G401 (cell line): ENCODE measurements at regions of chr20 and their contacts with region 1.

Region 1: GRCh38 chr20:44537993-44538392 is 16.1 kb upstream of the SERINC3 start:
- DNase-seq: no peak

Region 2: DNA sequence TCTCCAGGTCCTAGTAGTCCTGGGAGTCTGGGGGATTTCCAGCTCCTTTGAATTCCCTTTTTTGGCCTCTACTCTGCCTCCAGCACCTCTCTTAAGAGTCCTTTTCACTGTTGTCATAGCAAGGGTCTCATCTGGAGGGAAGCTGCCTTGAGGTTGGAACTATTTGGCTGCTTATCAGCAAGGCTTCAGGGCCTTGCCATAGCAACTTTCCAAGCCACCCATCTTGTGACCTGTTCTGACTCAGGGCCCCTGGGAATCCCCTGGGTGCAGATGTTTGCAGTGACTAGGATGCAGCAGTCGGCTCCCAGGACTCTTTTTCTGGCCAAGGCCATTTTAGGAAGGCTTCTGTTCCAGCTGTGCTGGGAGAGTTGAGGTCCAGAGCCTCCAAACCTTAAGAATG is 56.7 kb after region 1 on chr20:
- in situ Hi-C with region 1: loop called (anchors 5 kb)
- DNase-seq: no peak

Region 3: DNA sequence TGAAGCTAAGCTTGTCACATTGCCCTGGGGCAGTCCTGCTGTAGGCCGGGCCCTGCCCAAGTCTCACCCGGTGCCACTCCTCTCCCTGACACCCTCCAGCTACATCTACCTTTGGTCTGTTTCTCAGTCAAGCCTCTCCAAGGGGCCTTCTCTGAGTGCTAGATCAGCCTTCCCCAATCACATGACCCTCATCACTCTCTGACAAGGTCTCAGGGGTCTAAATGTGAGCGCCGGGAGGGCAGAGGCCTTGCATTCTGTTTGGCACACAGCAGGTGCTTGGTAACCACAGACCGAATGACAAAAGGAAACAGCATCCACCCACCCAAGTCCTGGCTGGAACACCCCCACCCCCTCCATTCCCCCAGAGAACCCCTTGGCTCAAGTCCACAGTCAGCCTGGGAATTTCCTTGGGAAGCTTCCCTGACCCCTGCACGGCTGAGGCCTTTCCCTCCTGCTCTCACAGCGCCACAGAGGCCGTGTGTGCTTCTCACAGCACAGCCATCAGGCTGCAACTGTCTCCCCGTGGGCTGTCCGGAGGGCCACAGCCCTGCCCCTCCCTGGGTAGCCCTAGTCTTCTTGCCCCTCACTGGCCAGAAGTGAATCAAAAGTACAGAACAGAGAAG is 77.3 kb after region 1 on chr20:
- in situ Hi-C with region 1: loop called (anchors 5 kb)
- DNase-seq: no peak